ENCODE measurements at regions of chr20 and their contacts with region 1.

Region 1: DNA sequence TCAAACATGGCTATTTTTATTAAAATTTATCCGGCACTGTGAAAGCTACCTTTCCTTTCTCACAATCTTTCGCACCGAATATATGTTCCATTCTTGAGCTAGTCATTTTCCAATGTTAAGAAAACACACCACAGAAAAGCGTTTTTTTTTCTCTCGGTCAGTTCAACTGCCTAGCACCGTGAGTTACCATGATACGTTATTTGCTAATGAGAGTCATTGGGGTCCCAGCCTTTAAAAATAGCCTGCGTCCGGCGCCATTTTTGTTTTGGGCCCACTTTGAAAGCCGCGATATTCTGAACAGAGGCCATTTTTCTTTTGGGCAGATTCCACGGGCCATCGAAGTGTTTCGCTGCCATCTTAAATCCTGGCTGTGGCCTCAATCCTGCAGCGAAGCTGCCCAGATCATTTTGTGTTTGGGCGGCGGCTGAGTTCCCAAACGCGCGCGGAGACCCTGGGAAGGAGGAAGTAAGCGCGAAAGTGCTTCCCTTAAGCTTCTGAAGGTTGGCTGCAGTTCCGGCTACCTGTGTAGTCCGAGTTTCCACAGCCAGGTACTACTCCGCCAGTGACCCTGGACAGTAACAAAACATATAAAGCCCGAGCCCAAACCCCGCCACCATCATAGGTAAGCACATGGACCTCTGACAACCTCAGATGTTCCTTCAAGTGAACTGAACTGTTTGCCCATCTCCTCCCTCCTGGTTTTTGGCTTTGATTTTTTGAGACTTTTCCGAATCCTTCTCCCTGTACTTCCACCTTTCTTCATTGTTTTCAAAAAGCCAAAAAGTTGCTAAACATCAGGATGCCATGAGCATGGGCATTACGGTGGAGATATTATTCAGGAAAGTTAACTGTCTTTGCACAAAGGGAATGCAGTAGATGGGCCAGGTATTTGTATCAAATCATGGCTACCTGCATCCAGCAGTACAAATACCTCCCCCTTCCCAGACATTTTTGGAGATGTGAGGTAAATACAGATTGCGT is at the start of gene SLX4IP:
- DNase-seq: peak; percentile 91
- H3K4me3 Mint-ChIP-seq: peak within 1 kb of the TSS; percentile 95
- H3K27ac Mint-ChIP-seq: peak within 1 kb of the TSS; percentile 96
- H3K4me1 Mint-ChIP-seq: peaks cover 42% of the 10 kb centered on the region
- H3K27me3 Mint-ChIP-seq: no peaks in the 10 kb centered on the region
- total RNA-seq, gene SLX4IP: 4.9 to 5.2 TPM

Region 2: GRCh38 chr20:10034717-10035571 is 400.2 kb before region 1 on chr20 and contains the start of gene ANKEF1:
- CTCF ChIA-PET with region 1: no interaction called
- intact Hi-C with region 1: loop called (anchors 1 kb)
- DNase-seq: peak; percentile 75
- H3K4me3 Mint-ChIP-seq: peak within 1 kb of the TSS; percentile 66
- H3K27ac Mint-ChIP-seq: no peak within 1 kb of the TSS
- H3K4me1 Mint-ChIP-seq: peaks cover 6% of the 10 kb centered on the region
- H3K27me3 Mint-ChIP-seq: no peaks in the 10 kb centered on the region
- total RNA-seq, gene ANKEF1: 2.8 to 3.2 TPM

Region 3: GRCh38 chr20:10369723-10370090 is 65.4 kb before region 1 on chr20:
- CTCF ChIA-PET with region 1: no interaction called
- intact Hi-C with region 1: no loop called
- DNase-seq: no peak
- H3K4me3 Mint-ChIP-seq: no peak overlapping the region
- H3K27ac Mint-ChIP-seq: no peak overlapping the region
- H3K4me1 Mint-ChIP-seq: no peaks in the 10 kb centered on the region
- H3K27me3 Mint-ChIP-seq: peaks cover 27% of the 10 kb centered on the region

Region 4: DNA sequence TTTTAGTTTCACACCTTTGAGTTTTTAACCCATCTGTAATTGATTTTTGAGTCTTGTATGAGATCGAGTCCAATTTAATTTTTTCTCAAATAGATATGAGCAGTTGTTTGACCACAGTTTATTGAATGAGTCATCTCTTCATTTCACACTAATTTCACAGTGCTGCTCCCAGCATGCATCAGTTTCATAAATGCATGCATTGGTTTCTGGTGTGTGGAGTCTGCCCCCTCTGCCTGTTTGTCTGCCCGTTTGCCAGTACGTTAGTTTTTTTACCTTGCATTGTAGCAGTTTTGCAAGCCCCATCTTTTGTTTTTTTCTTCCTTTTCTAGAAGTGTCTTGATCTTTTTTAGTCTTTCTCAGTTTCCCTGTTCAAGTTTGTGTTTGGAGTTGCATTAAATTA is 11.9 kb after region 1 on chr20:
- CTCF ChIA-PET with region 1: interaction called, 7 read pairs
- intact Hi-C with region 1: loop called (anchors 1 kb)
- DNase-seq: peak; percentile 76
- H3K4me3 Mint-ChIP-seq: peak overlapping the region; percentile 64
- H3K27ac Mint-ChIP-seq: peak overlapping the region; percentile 59
- H3K4me1 Mint-ChIP-seq: peaks cover 26% of the 10 kb centered on the region
- H3K27me3 Mint-ChIP-seq: no peaks in the 10 kb centered on the region

Region 5: DNA sequence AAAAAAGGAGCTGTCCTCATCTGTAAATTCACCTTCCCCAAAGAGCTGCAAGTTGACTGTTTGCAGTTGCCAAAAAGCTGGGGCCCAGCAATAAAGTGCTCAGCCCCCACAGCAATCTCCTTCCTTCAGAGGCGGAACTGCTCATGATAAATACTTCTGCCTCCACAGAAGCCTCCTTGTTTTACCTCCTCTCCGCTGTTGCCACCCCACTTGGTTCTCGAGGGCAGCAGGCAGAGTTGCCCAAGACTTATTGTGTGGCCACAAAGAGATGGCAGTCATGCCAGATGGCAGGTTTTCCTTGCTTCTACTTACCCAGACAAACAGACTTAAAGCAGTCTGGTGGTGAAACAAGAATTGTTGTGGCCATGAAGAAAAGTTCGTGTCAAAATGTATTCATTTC is 66.3 kb after region 1 on chr20:
- CTCF ChIA-PET with region 1: no interaction called
- intact Hi-C with region 1: loop called (anchors 2 kb)
- DNase-seq: peak; percentile 17
- H3K4me3 Mint-ChIP-seq: peak overlapping the region; percentile 73
- H3K27ac Mint-ChIP-seq: peak overlapping the region; percentile 71
- H3K4me1 Mint-ChIP-seq: peaks cover 19% of the 10 kb centered on the region
- H3K27me3 Mint-ChIP-seq: no peaks in the 10 kb centered on the region

Region 6: GRCh38 chr20:10553326-10553984 is 118.3 kb after region 1 on chr20:
- CTCF ChIA-PET with region 1: interaction called, 3 read pairs
- intact Hi-C with region 1: loop called (anchors 1 kb)
- DNase-seq: peak; percentile 74
- H3K4me3 Mint-ChIP-seq: no peak overlapping the region
- H3K27ac Mint-ChIP-seq: no peak overlapping the region
- H3K4me1 Mint-ChIP-seq: peaks cover 37% of the 10 kb centered on the region
- H3K27me3 Mint-ChIP-seq: no peaks in the 10 kb centered on the region

Region 7: GRCh38 chr20:10673988-10674711 is 239.0 kb after region 1 on chr20 and contains the start of gene JAG1:
- CTCF ChIA-PET with region 1: no interaction called
- intact Hi-C with region 1: loop called (anchors 1 kb)
- DNase-seq: peak; percentile 69
- H3K4me3 Mint-ChIP-seq: peak within 1 kb of the TSS; percentile 78
- H3K27ac Mint-ChIP-seq: no peak within 1 kb of the TSS
- H3K4me1 Mint-ChIP-seq: peaks cover 21% of the 10 kb centered on the region
- H3K27me3 Mint-ChIP-seq: peaks cover 60% of the 10 kb centered on the region
- total RNA-seq, gene JAG1: 0.25 to 0.41 TPM